ENCODE measurements at regions of chr3 and their contacts with region 1.

Region 1: DNA sequence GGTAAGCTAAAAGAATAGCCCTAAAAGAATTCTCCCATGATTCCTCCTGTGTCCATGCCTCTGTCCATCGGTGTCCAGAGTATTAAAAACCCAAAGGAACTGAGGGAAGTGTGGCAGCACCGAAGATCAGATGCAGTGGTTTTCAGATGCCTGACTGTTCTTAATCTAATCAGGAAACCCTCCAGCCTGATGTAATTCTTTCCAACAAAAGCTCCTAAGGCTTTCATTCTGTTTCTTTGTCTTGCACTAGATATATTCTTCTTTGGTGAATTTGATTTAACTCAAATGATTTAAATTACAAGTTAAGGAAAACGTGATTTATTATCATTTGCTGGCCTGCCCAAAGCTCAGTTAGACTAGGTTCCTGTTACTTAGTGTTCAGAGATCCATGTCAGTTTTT is 71.2 kb downstream of the ARHGAP31 start:
- DNase-seq: no peak
- ATAC-seq: no peak
- H3K4me3 ChIP-seq: no peak overlapping the region
- H3K27ac ChIP-seq: no peak overlapping the region
- H3K4me1 ChIP-seq: no peaks in the 10 kb centered on the region
- H3K27me3 ChIP-seq: no peaks in the 10 kb centered on the region
- CTCF ChIP-seq: no peak

Region 2: GRCh38 chr3:119352849-119353502 is 12.4 kb before region 1 on chr3:
- CTCF ChIA-PET with region 1: interaction called, 12 read pairs
- POLR2A ChIA-PET with region 1: interaction called, 8 read pairs
- in situ Hi-C with region 1: no loop called
- intact Hi-C with region 1: no loop called
- DNase-seq: no peak
- ATAC-seq: peak; percentile 69
- H3K4me3 ChIP-seq: no peak overlapping the region
- H3K27ac ChIP-seq: no peak overlapping the region
- H3K4me1 ChIP-seq: no peaks in the 10 kb centered on the region
- H3K27me3 ChIP-seq: no peaks in the 10 kb centered on the region
- CTCF ChIP-seq: peak; percentile 48

Measured in Panc1 (cell line).